CD8-positive, alpha-beta T cell (primary cell): ENCODE measurements at regions of chr16 and their contacts with region 1.

Region 1: GRCh38 chr16:180938-181667 is 844 bp downstream of the HBQ1 start:
- DNase-seq: peak; percentile 74 to 93 (median 85)
- ATAC-seq: peak; percentile 89
- H3K4me3 ChIP-seq: peak overlapping the region; percentile 42 to 59
- H3K4me3 Mint-ChIP-seq: peak overlapping the region; percentile 63
- H3K27ac ChIP-seq: no peak overlapping the region
- H3K27ac Mint-ChIP-seq: no peak overlapping the region
- H3K4me1 ChIP-seq: peaks cover 20% of the 10 kb centered on the region
- H3K4me1 Mint-ChIP-seq: peaks cover 8% of the 10 kb centered on the region
- H3K27me3 ChIP-seq: peaks cover 14 to 16% of the 10 kb centered on the region in 2 experiments
- H3K27me3 Mint-ChIP-seq: peaks cover 16% of the 10 kb centered on the region
- CTCF ChIP-seq: peak; percentile 96

Region 2: GRCh38 chr16:112153-112840 is 68.8 kb before region 1 on chr16:
- CTCF ChIA-PET with region 1: interaction called, 39 read pairs
- POLR2A ChIA-PET with region 1: interaction called, 6 read pairs
- intact Hi-C with region 1: loop called (anchors 1 kb)
- DNase-seq: no peak
- ATAC-seq: no peak
- H3K4me3 ChIP-seq: no peak overlapping the region
- H3K4me3 Mint-ChIP-seq: no peak overlapping the region
- H3K27ac ChIP-seq: no peak overlapping the region
- H3K27ac Mint-ChIP-seq: no peak overlapping the region
- H3K4me1 ChIP-seq: no peaks in the 10 kb centered on the region
- H3K4me1 Mint-ChIP-seq: no peaks in the 10 kb centered on the region
- H3K27me3 ChIP-seq: no peaks in the 10 kb centered on the region
- H3K27me3 Mint-ChIP-seq: no peaks in the 10 kb centered on the region
- CTCF ChIP-seq: no peak

Region 3: GRCh38 chr16:138049-138417 is 43.1 kb before region 1 on chr16:
- CTCF ChIA-PET with region 1: interaction called, 4 read pairs
- POLR2A ChIA-PET with region 1: no interaction called
- intact Hi-C with region 1: loop called in 1 of 2 experiments (anchors 2 kb)
- DNase-seq: peak in 6 of 9 experiments; percentile 8 to 61 (median 36)
- ATAC-seq: peak; percentile 25
- H3K4me3 ChIP-seq: peak overlapping the region; percentile 58 to 75
- H3K4me3 Mint-ChIP-seq: peak overlapping the region; percentile 85
- H3K27ac ChIP-seq: peak overlapping the region; percentile 33 to 40
- H3K27ac Mint-ChIP-seq: peak overlapping the region; percentile 66
- H3K4me1 ChIP-seq: peaks cover 7% of the 10 kb centered on the region
- H3K4me1 Mint-ChIP-seq: peaks cover 34% of the 10 kb centered on the region
- H3K27me3 ChIP-seq: no peaks in the 10 kb centered on the region
- H3K27me3 Mint-ChIP-seq: no peaks in the 10 kb centered on the region
- CTCF ChIP-seq: no peak

Region 4: DNA sequence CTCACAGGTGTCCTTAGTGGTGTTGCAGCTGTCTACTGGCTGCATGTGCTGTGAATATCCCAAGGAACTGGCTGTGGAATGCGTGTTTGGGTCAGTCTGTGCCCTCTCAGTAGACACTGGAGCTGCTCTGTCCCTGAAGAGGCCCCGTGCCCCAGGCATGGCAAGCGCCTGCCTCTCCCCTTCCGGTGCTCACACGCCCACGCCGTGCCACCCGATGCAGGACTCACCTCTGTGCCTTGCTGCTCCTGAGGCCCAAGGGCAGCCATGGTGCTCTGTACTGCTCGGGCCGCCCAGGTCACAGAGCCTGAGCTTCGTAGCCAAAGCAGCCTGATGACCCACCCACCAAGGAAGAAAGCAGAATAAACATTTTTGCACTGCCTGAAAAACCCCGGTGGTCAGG is 84.6 kb after region 1 on chr16:
- CTCF ChIA-PET with region 1: no interaction called
- POLR2A ChIA-PET with region 1: no interaction called
- intact Hi-C with region 1: no loop called
- DNase-seq: no peak
- ATAC-seq: no peak
- H3K4me3 ChIP-seq: no peak overlapping the region
- H3K4me3 Mint-ChIP-seq: no peak overlapping the region
- H3K27ac ChIP-seq: no peak overlapping the region
- H3K27ac Mint-ChIP-seq: no peak overlapping the region
- H3K4me1 ChIP-seq: no peaks in the 10 kb centered on the region
- H3K4me1 Mint-ChIP-seq: peaks cover 2% of the 10 kb centered on the region
- H3K27me3 ChIP-seq: no peaks in the 10 kb centered on the region
- H3K27me3 Mint-ChIP-seq: no peaks in the 10 kb centered on the region
- CTCF ChIP-seq: no peak

Region 5: GRCh38 chr16:278863-279366 is 97.8 kb after region 1 on chr16:
- CTCF ChIA-PET with region 1: no interaction called
- POLR2A ChIA-PET with region 1: no interaction called
- intact Hi-C with region 1: no loop called
- DNase-seq: peak in 5 of 9 experiments; percentile 7 to 72 (median 46)
- ATAC-seq: peak; percentile 77
- H3K4me3 ChIP-seq: no peak overlapping the region
- H3K4me3 Mint-ChIP-seq: no peak overlapping the region
- H3K27ac ChIP-seq: no peak overlapping the region
- H3K27ac Mint-ChIP-seq: no peak overlapping the region
- H3K4me1 ChIP-seq: peaks cover 12% of the 10 kb centered on the region
- H3K4me1 Mint-ChIP-seq: peaks cover 9% of the 10 kb centered on the region
- H3K27me3 ChIP-seq: peaks cover 8 to 26% of the 10 kb centered on the region in 2 experiments
- H3K27me3 Mint-ChIP-seq: peaks cover 15% of the 10 kb centered on the region
- CTCF ChIP-seq: no peak